B cell (primary cell): ENCODE measurements at regions of chr3 and their contacts with region 1.

Region 1: GRCh38 chr3:179147873-179148615 is at the start of gene PIK3CA:
- DNase-seq: peak; percentile 98
- ATAC-seq: peak; percentile 76
- H3K4me3 ChIP-seq: peak within 1 kb of the TSS; percentile 84 to 98 (median 90)
- H3K4me3 Mint-ChIP-seq: peak within 1 kb of the TSS; percentile 97
- H3K27ac ChIP-seq: peak within 1 kb of the TSS; percentile 92 to 93
- H3K27ac Mint-ChIP-seq: peak within 1 kb of the TSS; percentile 97
- H3K4me1 ChIP-seq: peaks cover 11 to 22% of the 10 kb centered on the region in 2 donors
- H3K4me1 Mint-ChIP-seq: peaks cover 39% of the 10 kb centered on the region
- H3K27me3 ChIP-seq: no peaks in the 10 kb centered on the region
- H3K27me3 Mint-ChIP-seq: peaks cover 3% of the 10 kb centered on the region
- CTCF ChIP-seq: no peak
- total RNA-seq, gene PIK3CA: 59.5 and 61.8 TPM in 2 replicates

Region 2: GRCh38 chr3:178966299-178967176 is 181.5 kb before region 1 on chr3:
- CTCF ChIA-PET with region 1: no interaction called
- POLR2A ChIA-PET with region 1: interaction called, 11 read pairs
- intact Hi-C with region 1: no loop called
- DNase-seq: peak; percentile 35
- ATAC-seq: peak; percentile 15
- H3K4me3 ChIP-seq: peak overlapping the region in 4 of 5 experiments; percentile 2 to 31 (median 14)
- H3K4me3 Mint-ChIP-seq: peak overlapping the region; percentile 77
- H3K27ac ChIP-seq: peak overlapping the region; percentile 54 to 79
- H3K27ac Mint-ChIP-seq: peak overlapping the region; percentile 78
- H3K4me1 ChIP-seq: peaks cover 36 to 38% of the 10 kb centered on the region in 2 donors
- H3K4me1 Mint-ChIP-seq: peaks cover 40% of the 10 kb centered on the region
- H3K27me3 ChIP-seq: peaks cover 0 to 6% (median 0%) of the 10 kb centered on the region in 4 experiments
- H3K27me3 Mint-ChIP-seq: no peaks in the 10 kb centered on the region
- CTCF ChIP-seq: peak; percentile 57

Region 3: DNA sequence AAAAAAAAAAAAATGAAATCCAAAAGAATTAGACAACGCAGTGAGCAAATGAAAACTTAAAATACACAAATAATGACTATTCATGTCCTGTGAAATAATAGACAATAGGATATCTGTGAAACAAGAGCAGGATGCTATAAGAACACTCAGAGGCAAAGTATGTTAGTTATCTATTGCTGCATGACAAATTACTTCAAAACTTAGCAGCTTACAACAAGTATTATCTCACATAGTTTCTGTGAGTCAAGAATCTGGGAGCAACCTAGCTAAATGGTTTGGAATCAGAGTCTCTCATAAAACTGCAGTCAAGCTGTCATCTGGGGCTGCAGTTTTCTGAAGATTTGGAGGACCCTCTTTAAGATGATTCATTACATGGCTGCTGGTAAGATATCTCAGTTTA is 40.0 kb before region 1 on chr3:
- CTCF ChIA-PET with region 1: interaction called, 5 read pairs
- POLR2A ChIA-PET with region 1: no interaction called
- intact Hi-C with region 1: loop called (anchors 1 kb)
- DNase-seq: no peak
- ATAC-seq: no peak
- H3K4me3 ChIP-seq: no peak overlapping the region
- H3K4me3 Mint-ChIP-seq: no peak overlapping the region
- H3K27ac ChIP-seq: no peak overlapping the region
- H3K27ac Mint-ChIP-seq: no peak overlapping the region
- H3K4me1 ChIP-seq: no peaks in the 10 kb centered on the region
- H3K4me1 Mint-ChIP-seq: no peaks in the 10 kb centered on the region
- H3K27me3 ChIP-seq: peaks cover 0 to 3% (median 0%) of the 10 kb centered on the region in 4 experiments
- H3K27me3 Mint-ChIP-seq: peaks cover 23% of the 10 kb centered on the region
- CTCF ChIP-seq: no peak

Region 4: DNA sequence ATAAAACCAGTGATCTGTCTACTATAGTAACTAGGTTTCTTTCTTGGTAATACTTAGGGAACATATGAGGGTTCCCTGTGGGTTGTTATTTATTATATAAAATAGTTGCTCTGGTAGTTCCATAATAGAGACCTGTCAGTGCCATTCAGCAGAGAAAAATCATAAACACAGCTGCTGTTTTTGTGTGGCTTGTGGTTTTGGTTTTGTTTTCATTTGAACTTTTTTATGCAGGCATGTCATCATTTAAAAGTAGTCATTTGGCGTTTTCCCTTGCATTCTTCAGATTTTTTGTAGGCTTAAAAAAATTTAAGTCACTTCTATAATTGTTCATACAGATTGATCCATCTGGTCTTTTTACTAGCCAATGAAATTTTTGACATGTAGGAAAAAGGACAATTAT is 48.1 kb after region 1 on chr3:
- CTCF ChIA-PET with region 1: interaction called, 3 read pairs
- POLR2A ChIA-PET with region 1: interaction called, 7 read pairs
- intact Hi-C with region 1: loop called (anchors 1 kb)
- DNase-seq: peak; percentile 35
- ATAC-seq: peak; percentile 49
- H3K4me3 ChIP-seq: no peak overlapping the region
- H3K4me3 Mint-ChIP-seq: peak overlapping the region; percentile 51
- H3K27ac ChIP-seq: peak overlapping the region in 1 of 2 donors; percentile 46
- H3K27ac Mint-ChIP-seq: peak overlapping the region; percentile 72
- H3K4me1 ChIP-seq: peaks cover 17 to 29% of the 10 kb centered on the region in 2 donors
- H3K4me1 Mint-ChIP-seq: peaks cover 45% of the 10 kb centered on the region
- H3K27me3 ChIP-seq: no peaks in the 10 kb centered on the region
- H3K27me3 Mint-ChIP-seq: no peaks in the 10 kb centered on the region
- CTCF ChIP-seq: no peak

Region 5: DNA sequence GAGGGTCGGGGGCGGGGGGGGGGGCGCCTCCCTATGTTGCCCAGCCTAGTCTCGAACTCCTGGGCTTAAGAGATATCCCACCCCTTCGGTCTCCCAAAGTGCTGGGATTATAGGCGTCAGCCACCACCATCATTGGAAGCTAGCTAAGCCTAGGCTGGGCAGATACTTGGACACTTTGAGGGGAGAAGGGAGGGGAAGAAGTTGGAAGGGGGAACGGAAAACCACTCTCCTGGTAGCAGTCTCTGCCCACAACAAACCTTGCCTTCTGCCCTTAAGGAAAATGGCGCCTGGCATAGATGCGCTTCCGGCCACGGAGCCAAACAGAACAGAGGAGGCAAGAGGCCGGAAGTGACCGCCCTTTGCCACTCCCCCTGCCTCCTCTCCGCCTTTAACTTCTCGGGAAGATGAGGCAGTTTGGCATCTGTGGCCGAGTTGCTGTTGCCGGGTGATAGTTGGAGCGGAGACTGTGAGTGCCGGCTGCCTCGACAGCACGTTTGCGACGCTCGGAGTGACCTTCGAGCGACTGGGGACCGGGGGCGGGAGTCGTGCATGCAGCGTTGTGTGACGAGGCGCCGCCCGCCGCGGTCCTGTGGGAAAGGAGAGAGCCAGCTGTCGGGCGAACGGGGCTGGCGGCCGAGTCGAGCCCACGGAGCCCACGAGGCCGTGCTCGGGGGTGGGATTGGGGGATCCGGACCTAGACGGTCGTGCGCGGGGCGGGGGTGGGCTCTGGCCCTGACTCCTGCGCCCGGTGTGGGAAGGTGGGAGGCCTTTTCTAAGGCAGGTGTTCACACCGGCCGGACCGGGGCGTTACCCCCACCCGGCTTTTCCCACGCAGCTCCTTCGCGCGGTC is 199.5 kb after region 1 on chr3 and contains the start of gene MFN1:
- CTCF ChIA-PET with region 1: no interaction called
- POLR2A ChIA-PET with region 1: interaction called, 14 read pairs
- intact Hi-C with region 1: loop called (anchors 1 kb)
- DNase-seq: peak; percentile 92
- ATAC-seq: peak; percentile 88
- H3K4me3 ChIP-seq: peak within 1 kb of the TSS; percentile 83 to 99 (median 98)
- H3K4me3 Mint-ChIP-seq: peak within 1 kb of the TSS; percentile 95
- H3K27ac ChIP-seq: peak within 1 kb of the TSS; percentile 71 to 86
- H3K27ac Mint-ChIP-seq: peak within 1 kb of the TSS; percentile 93
- H3K4me1 ChIP-seq: peaks cover 17 to 32% of the 10 kb centered on the region in 2 donors
- H3K4me1 Mint-ChIP-seq: peaks cover 28% of the 10 kb centered on the region
- H3K27me3 ChIP-seq: no peaks in the 10 kb centered on the region
- H3K27me3 Mint-ChIP-seq: no peaks in the 10 kb centered on the region
- CTCF ChIP-seq: no peak
- total RNA-seq, gene MFN1: 98.9 and 108 TPM in 2 replicates

Region 6: GRCh38 chr3:179562591-179563270 is 414.7 kb after region 1 on chr3 and contains the start of gene ACTL6A:
- CTCF ChIA-PET with region 1: interaction called, 6 read pairs
- POLR2A ChIA-PET with region 1: interaction called, 3 read pairs
- intact Hi-C with region 1: loop called (anchors 1 kb)
- DNase-seq: peak; percentile 98
- ATAC-seq: peak; percentile 90
- H3K4me3 ChIP-seq: peak within 1 kb of the TSS; percentile 55 to 87 (median 83)
- H3K4me3 Mint-ChIP-seq: peak within 1 kb of the TSS; percentile 98
- H3K27ac ChIP-seq: peak within 1 kb of the TSS; percentile 58 to 73
- H3K27ac Mint-ChIP-seq: peak within 1 kb of the TSS; percentile 94
- H3K4me1 ChIP-seq: peaks cover 9% of the 10 kb centered on the region in 2 donors
- H3K4me1 Mint-ChIP-seq: peaks cover 26% of the 10 kb centered on the region
- H3K27me3 ChIP-seq: no peaks in the 10 kb centered on the region
- H3K27me3 Mint-ChIP-seq: no peaks in the 10 kb centered on the region
- CTCF ChIP-seq: no peak
- total RNA-seq, gene ACTL6A: 48.5 and 55.1 TPM in 2 replicates

Region 7: GRCh38 chr3:179666436-179667035 is 518.5 kb after region 1 on chr3:
- CTCF ChIA-PET with region 1: no interaction called
- POLR2A ChIA-PET with region 1: no interaction called
- intact Hi-C with region 1: no loop called
- DNase-seq: no peak
- ATAC-seq: no peak
- H3K4me3 ChIP-seq: no peak overlapping the region
- H3K4me3 Mint-ChIP-seq: no peak overlapping the region
- H3K27ac ChIP-seq: no peak overlapping the region
- H3K27ac Mint-ChIP-seq: no peak overlapping the region
- H3K4me1 ChIP-seq: no peaks in the 10 kb centered on the region
- H3K4me1 Mint-ChIP-seq: peaks cover 4% of the 10 kb centered on the region
- H3K27me3 ChIP-seq: no peaks in the 10 kb centered on the region
- H3K27me3 Mint-ChIP-seq: no peaks in the 10 kb centered on the region
- CTCF ChIP-seq: no peak

Region 8: GRCh38 chr3:180571831-180572598 is 1424.0 kb after region 1 on chr3:
- CTCF ChIA-PET with region 1: no interaction called
- POLR2A ChIA-PET with region 1: interaction called, 12 read pairs
- intact Hi-C with region 1: no loop called
- DNase-seq: no peak
- ATAC-seq: no peak
- H3K4me3 ChIP-seq: no peak overlapping the region
- H3K4me3 Mint-ChIP-seq: no peak overlapping the region
- H3K27ac ChIP-seq: no peak overlapping the region
- H3K27ac Mint-ChIP-seq: no peak overlapping the region
- H3K4me1 ChIP-seq: no peaks in the 10 kb centered on the region
- H3K4me1 Mint-ChIP-seq: no peaks in the 10 kb centered on the region
- H3K27me3 ChIP-seq: no peaks in the 10 kb centered on the region
- H3K27me3 Mint-ChIP-seq: peaks cover 14% of the 10 kb centered on the region
- CTCF ChIP-seq: no peak